ENCODE measurements at regions of chr15 and their contacts with region 1.

Region 1: GRCh38 chr15:48267766-48268165 is 61.7 kb downstream of the SLC12A1 start:
- H3K4me3 ChIP-seq: no peak overlapping the region
- H3K27ac ChIP-seq: no peak overlapping the region
- H3K4me1 ChIP-seq: no peaks in the 10 kb centered on the region
- CTCF ChIP-seq: no peak

Region 2: GRCh38 chr15:48120745-48121144 is 147.0 kb before region 1 on chr15 and contains the start of gene SLC24A5:
- CTCF ChIA-PET with region 1: no interaction called
- POLR2A ChIA-PET with region 1: no interaction called
- H3K4me3 ChIP-seq: no peak within 1 kb of the TSS
- H3K27ac ChIP-seq: no peak within 1 kb of the TSS
- H3K4me1 ChIP-seq: no peaks in the 10 kb centered on the region
- CTCF ChIP-seq: no peak

Region 3: DNA sequence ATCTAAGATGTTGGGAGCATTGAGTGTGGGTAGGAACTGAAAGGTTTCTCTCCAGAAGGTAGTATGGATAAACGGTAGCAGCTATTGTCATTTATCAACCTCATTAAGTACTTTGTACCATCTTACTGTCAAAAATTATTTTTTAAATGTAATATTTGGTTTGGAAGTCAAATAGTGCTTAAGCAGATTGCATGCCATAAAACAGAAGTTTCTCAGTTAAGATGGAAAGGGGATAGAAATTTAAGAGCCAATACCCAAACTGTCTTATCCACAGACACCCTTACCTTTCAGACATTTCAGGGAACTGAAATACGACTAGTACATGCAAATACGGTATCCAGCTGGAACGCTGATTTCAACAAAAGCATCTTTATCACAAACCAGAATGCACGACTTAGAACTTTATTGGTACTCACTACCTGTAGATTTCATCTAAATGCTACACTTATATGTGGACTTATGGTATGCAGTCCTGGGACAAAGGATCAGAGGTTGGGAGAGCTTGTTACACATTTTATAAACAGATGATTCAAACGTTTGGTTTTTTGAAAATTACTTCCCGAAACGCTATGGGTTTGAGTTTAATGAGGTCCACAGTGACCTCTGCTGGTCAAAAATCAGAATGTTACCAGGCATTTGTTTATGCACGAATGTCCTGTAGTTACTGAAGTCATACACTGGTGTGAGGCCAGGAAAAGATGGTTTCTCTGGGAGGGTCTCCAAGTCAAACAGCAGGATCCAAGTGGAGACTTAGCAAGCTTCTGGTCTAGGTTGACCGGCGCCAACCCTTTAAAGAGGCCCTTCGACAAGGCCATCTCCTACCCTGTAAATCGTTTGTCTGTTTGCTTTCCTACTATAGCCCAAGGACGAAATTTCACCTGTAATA is 17.8 kb after region 1 on chr15:
- CTCF ChIA-PET with region 1: interaction called, 15 read pairs
- POLR2A ChIA-PET with region 1: no interaction called
- H3K4me3 ChIP-seq: no peak overlapping the region
- H3K27ac ChIP-seq: no peak overlapping the region
- H3K4me1 ChIP-seq: no peaks in the 10 kb centered on the region
- CTCF ChIP-seq: no peak

Region 4: DNA sequence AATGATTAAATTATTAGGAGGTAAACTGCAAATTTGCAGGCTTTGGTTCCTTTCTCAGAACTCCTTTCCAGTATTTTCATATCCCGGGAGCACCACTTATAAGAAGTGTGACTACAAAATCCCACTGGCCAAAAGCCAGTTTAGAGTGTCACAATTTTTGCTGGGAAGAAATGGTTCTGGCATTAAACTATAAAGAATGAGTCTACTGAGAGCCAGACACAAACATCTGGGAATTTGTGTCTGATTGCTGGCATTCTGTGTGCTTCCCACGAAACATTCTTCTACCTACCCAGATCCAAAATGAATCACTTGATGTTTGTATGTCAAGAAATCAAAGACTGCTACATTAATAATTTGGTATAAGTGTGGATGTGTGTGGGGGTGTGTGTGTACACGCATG is 146.2 kb after region 1 on chr15:
- CTCF ChIA-PET with region 1: no interaction called
- POLR2A ChIA-PET with region 1: no interaction called
- H3K4me3 ChIP-seq: no peak overlapping the region
- H3K27ac ChIP-seq: no peak overlapping the region
- H3K4me1 ChIP-seq: no peaks in the 10 kb centered on the region
- CTCF ChIP-seq: no peak